Calu3 (cell line): ENCODE measurements at regions of chrX and their contacts with region 1.

Region 1: DNA sequence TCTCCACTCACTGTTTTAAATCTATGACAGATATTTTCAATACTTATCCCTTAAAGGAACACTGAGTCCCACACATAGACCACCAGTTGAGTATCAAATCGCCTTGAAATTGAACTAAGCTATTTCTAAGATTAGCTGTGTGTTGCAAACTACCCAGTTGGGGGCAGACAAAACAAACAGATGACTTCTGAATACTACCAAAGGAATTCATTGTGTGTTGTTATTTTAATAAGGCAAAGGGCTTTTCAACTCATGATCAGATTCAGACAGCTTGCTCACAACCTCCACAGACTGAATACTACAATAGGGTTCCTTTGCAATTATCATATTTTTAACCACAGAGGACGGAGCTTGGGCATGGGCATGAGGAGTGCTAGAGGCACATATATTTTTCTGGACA is 283.0 kb upstream of the GPC4 start:
- DNase-seq: peak; percentile 26
- H3K4me3 Mint-ChIP-seq: peak overlapping the region; percentile 14
- H3K27ac Mint-ChIP-seq: peak overlapping the region; percentile 85
- H3K4me1 Mint-ChIP-seq: peaks cover 58% of the 10 kb centered on the region
- H3K27me3 Mint-ChIP-seq: no peaks in the 10 kb centered on the region
- CTCF ChIP-seq: no peak

Region 2: GRCh38 chrX:133171962-133172708 is 526.2 kb before region 1 on chrX:
- CTCF ChIA-PET with region 1: no interaction called
- intact Hi-C with region 1: no loop called
- DNase-seq: peak; percentile 40
- H3K4me3 Mint-ChIP-seq: no peak overlapping the region
- H3K27ac Mint-ChIP-seq: no peak overlapping the region
- H3K4me1 Mint-ChIP-seq: peaks cover 8% of the 10 kb centered on the region
- H3K27me3 Mint-ChIP-seq: no peaks in the 10 kb centered on the region
- CTCF ChIP-seq: peak; percentile 45

Region 3: DNA sequence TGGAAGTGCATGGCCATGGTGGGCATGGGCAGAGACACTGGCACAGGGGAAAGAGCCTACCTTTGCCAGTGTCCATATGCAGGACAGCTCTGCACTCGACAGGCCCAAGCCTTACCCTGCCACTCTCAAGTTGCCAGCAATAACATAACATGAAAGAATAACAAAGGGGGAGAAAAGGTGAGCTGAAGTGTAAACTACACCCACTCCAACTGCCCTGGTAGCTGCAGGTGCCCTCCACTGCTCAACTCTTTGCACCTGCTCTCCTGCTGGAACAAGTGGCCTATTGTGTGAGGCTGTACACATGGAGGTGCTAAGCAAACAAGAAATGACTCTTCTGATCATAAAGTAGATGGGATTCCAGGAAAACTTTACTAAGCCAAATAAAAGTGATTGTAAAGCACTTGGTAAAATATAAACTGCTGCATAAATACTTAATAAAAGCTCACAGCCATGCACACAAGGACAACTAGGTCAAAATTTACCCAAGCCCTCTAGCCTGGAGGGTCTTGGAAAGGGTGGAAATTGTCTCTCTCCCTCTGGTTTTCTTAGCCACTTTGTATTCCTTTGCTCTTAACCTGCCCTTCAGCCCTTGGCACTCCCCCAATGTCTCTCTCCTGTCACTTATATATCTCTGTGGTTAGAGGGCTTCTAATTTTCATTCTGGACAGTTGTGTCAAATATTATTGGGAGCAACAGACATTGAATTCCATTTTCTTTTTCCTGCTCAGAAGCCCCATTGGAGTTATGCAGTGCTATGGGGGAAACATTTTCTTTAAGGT is 21.8 kb before region 1 on chrX:
- CTCF ChIA-PET with region 1: interaction called, 13 read pairs
- intact Hi-C with region 1: no loop called
- DNase-seq: peak; percentile 65
- H3K4me3 Mint-ChIP-seq: no peak overlapping the region
- H3K27ac Mint-ChIP-seq: peak overlapping the region; percentile 85
- H3K4me1 Mint-ChIP-seq: peaks cover 50% of the 10 kb centered on the region
- H3K27me3 Mint-ChIP-seq: no peaks in the 10 kb centered on the region
- CTCF ChIP-seq: no peak

Region 4: GRCh38 chrX:133709486-133709885 is 11.2 kb after region 1 on chrX:
- CTCF ChIA-PET with region 1: interaction called, 14 read pairs
- intact Hi-C with region 1: no loop called
- DNase-seq: no peak
- H3K4me3 Mint-ChIP-seq: no peak overlapping the region
- H3K27ac Mint-ChIP-seq: peak overlapping the region; percentile 62
- H3K4me1 Mint-ChIP-seq: peaks cover 48% of the 10 kb centered on the region
- H3K27me3 Mint-ChIP-seq: no peaks in the 10 kb centered on the region
- CTCF ChIP-seq: no peak

Region 5: GRCh38 chrX:133776072-133776471 is 77.8 kb after region 1 on chrX:
- CTCF ChIA-PET with region 1: interaction called, 5 read pairs
- intact Hi-C with region 1: loop called (anchors 5 kb)
- DNase-seq: no peak
- H3K4me3 Mint-ChIP-seq: no peak overlapping the region
- H3K27ac Mint-ChIP-seq: no peak overlapping the region
- H3K4me1 Mint-ChIP-seq: peaks cover 21% of the 10 kb centered on the region
- H3K27me3 Mint-ChIP-seq: no peaks in the 10 kb centered on the region
- CTCF ChIP-seq: peak; percentile 50

Region 6: GRCh38 chrX:133838761-133839676 is 140.7 kb after region 1 on chrX:
- CTCF ChIA-PET with region 1: interaction called, 24 read pairs
- intact Hi-C with region 1: loop called (anchors 2 kb)
- DNase-seq: peak; percentile 66
- H3K4me3 Mint-ChIP-seq: no peak overlapping the region
- H3K27ac Mint-ChIP-seq: no peak overlapping the region
- H3K4me1 Mint-ChIP-seq: peaks cover 10% of the 10 kb centered on the region
- H3K27me3 Mint-ChIP-seq: no peaks in the 10 kb centered on the region
- CTCF ChIP-seq: peak; percentile 46

Region 7: DNA sequence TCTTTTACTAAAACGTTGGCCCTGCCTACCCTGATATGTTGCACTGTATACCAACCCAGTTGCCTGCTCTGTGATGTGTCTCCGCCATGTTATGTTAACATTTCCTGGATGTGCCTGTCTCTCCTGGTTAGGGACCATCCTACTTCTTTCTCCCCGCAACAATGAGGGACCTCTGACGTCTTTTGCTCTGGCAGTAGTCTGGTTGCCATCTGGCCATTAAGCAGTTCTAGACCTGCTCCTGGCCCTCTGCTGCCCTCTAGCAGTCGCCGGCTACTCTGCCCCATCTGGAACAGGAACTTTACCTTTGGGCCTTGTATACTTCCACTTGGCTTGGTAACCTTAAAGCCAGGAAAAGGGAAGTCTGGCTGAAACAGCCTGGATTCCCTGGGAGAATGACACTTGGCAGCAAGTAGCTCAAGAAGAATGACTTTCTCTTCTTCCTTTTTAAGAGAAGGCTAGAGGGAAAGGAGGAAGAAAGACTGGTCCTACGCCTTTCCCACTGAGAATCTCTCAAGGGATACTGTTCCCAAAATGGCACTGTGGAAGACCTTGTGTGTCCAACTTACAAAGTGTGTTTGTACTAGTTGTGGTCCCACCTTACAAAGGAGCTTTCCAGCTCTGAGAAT is 223.6 kb after region 1 on chrX:
- CTCF ChIA-PET with region 1: no interaction called
- intact Hi-C with region 1: loop called (anchors 1 kb)
- DNase-seq: peak; percentile 75
- H3K4me3 Mint-ChIP-seq: peak overlapping the region; percentile 13
- H3K27ac Mint-ChIP-seq: peak overlapping the region; percentile 13
- H3K4me1 Mint-ChIP-seq: peaks cover 12% of the 10 kb centered on the region
- H3K27me3 Mint-ChIP-seq: no peaks in the 10 kb centered on the region
- CTCF ChIP-seq: peak; percentile 66

Region 8: DNA sequence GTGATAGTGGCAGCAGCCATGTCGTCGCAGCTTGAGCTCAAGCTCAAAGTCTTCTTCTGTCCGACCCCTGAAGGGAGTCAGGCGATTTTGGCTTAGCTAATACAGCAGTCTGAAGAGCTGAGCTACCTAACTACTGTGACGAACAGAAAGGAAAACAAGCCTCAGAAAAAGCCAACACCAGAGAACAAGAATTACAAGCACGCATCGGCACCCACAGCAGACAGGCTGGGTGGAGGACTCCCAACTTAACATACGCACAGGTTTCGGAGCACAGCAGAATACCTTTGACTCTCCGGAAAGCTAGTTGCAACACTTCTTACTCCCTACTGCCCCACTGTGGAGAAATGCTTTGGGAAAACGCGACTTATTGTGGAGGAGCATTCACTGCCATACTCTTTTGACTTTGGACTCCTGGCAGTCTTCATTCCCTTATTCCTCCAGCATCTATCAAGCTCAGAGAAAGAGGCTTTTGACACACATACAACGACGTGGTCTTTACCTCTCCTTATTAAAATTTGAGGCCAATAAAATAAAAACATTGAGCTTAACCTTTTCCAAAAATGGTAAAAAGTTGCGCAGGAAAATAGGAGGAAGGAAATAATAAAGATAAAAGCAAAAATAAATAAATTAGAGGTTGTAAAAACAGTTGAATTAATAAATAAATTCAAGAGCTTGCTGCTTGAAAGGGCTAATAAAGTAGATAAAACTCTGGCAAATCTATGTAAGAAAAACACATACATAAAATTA is 328.4 kb after region 1 on chrX:
- CTCF ChIA-PET with region 1: interaction called, 8 read pairs
- intact Hi-C with region 1: loop called (anchors 5 kb)
- DNase-seq: peak; percentile 64
- H3K4me3 Mint-ChIP-seq: peak overlapping the region; percentile 53
- H3K27ac Mint-ChIP-seq: no peak overlapping the region
- H3K4me1 Mint-ChIP-seq: peaks cover 9% of the 10 kb centered on the region
- H3K27me3 Mint-ChIP-seq: no peaks in the 10 kb centered on the region
- CTCF ChIP-seq: peak; percentile 60